CD4-positive, alpha-beta memory T cell (primary cell): ENCODE measurements at regions of chr12 and their contacts with region 1.

Region 1: DNA sequence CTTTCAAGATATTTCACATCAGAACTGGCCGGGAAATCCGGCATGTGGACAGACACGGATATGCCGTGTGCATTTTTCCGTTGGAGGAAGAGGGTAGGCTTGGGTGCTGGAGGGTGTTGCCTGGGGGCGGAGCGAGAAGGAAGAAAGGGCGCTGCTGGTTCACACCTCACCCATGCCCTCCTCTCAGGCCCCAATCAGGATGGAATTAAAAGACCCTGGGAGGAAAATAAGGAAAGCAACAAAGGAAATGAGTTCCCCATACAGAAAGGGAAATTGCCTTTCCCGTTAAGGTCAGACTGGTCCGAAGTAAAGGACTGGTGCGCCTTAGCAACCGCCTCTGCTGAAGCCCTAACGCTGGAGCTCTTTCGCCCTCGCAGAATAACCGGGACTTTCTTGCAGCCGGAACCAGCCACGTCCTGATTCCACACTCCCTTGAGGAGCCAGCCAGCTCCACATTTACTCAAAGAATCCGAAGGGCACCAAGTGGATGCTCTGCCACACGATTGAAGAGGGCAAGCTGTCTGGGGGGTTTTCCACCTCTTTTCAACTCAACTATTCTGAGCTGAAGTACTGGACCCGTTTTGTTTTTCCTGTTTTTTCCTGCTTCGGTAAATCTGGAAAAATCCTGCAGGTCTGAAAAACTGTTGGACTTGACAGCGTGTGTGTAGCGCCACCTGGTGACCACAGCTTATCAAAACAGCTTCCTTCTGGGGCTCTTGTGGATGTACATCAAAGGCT is 37.7 kb upstream of the BCL2L14 start:
- DNase-seq: peak; percentile 66 to 74 (median 70)
- H3K4me3 ChIP-seq: peak overlapping the region; percentile 52 to 80
- H3K4me3 Mint-ChIP-seq: peak overlapping the region; percentile 77 to 93 (median 86)
- H3K27ac ChIP-seq: peak overlapping the region; percentile 53
- H3K27ac Mint-ChIP-seq: peak overlapping the region; percentile 77 to 96 (median 92)
- H3K4me1 ChIP-seq: peaks cover 20% of the 10 kb centered on the region
- H3K4me1 Mint-ChIP-seq: peaks cover 19 to 24% (median 21%) of the 10 kb centered on the region in 4 donors
- H3K27me3 ChIP-seq: no peaks in the 10 kb centered on the region
- H3K27me3 Mint-ChIP-seq: peaks cover 0 to 3% of the 10 kb centered on the region in 2 donors

Region 2: DNA sequence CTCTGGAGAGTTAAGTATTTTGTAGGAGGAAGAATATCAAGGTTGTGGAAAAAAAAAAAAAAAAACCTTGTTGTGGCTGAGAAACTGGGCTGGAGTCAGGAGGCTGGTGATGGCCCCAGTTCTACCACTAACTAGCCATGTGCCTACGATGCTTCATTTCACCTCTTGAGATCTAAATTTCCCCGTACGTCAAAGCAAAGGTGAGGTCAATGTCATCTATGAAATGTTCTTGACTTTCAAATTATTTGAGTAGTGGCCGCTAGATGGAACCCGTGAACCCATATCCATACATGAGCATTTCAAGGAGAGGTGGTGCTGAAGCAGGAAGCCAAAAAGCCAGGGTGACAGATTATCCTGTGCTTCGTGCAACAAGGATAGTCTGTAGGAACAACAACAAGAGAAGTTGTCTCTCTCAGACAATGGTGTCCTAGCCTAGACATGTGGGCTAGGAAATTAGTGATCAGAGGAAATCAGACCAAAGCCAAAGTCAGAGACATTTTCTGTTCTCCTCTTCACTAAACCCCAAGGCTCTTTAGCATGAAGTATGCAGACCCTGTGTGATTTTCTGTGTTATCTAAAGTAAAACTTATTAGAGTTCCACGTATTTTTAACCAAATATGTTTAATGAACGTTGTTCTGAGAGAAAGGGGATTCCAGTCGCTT is 479.0 kb before region 1 on chr12:
- CTCF ChIA-PET with region 1: interaction called, 15 read pairs
- POLR2A ChIA-PET with region 1: no interaction called
- intact Hi-C with region 1: loop called (anchors 1 kb)
- DNase-seq: peak; percentile 53 to 68 (median 57)
- H3K4me3 ChIP-seq: no peak overlapping the region
- H3K4me3 Mint-ChIP-seq: peak overlapping the region in 4 of 8 donors; percentile 0 to 57 (median 50)
- H3K27ac ChIP-seq: no peak overlapping the region
- H3K27ac Mint-ChIP-seq: peak overlapping the region in 3 of 7 donors; percentile 2 to 85 (median 17)
- H3K4me1 ChIP-seq: peaks cover 24% of the 10 kb centered on the region
- H3K4me1 Mint-ChIP-seq: peaks cover 19 to 32% (median 23%) of the 10 kb centered on the region in 4 donors
- H3K27me3 ChIP-seq: no peaks in the 10 kb centered on the region
- H3K27me3 Mint-ChIP-seq: no peaks in the 10 kb centered on the region

Region 3: DNA sequence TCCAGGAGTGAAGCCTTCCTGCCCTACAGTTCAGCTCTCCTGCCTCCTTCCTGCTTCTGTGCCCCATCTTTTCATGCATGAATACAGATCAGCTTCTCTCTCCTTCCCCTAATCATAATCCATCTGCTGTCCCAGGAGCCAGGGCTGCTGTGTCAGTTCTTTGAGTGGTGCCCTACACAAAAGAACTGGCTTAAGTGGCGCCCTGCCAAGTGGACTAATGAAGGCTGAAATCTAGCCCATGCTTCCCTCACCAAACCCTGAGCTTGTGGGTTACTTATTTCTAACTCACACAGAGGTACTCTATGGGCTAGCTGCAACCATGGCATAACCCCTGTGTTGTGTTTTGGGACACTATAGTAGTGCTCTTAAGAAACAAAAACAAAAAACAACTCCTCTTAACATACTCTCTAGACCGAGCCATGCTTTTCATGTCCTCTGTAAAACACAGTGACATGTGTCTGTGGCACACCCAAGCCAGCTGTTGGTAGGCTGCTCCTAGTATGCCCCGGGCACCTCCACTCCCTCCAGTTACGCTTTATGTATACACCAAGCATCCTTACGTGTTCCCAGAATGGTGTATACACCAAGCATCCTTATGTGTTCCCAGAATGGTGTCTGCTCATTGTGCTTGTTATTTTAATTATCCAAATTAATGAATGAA is 402.8 kb before region 1 on chr12:
- CTCF ChIA-PET with region 1: interaction called, 48 read pairs
- POLR2A ChIA-PET with region 1: no interaction called
- intact Hi-C with region 1: no loop called
- DNase-seq: no peak
- H3K4me3 ChIP-seq: no peak overlapping the region
- H3K4me3 Mint-ChIP-seq: no peak overlapping the region
- H3K27ac ChIP-seq: no peak overlapping the region
- H3K27ac Mint-ChIP-seq: no peak overlapping the region
- H3K4me1 ChIP-seq: no peaks in the 10 kb centered on the region
- H3K4me1 Mint-ChIP-seq: peaks cover 0 to 4% (median under 1%) of the 10 kb centered on the region in 4 donors
- H3K27me3 ChIP-seq: no peaks in the 10 kb centered on the region
- H3K27me3 Mint-ChIP-seq: peaks cover 0 to 1% of the 10 kb centered on the region in 2 donors

Region 4: DNA sequence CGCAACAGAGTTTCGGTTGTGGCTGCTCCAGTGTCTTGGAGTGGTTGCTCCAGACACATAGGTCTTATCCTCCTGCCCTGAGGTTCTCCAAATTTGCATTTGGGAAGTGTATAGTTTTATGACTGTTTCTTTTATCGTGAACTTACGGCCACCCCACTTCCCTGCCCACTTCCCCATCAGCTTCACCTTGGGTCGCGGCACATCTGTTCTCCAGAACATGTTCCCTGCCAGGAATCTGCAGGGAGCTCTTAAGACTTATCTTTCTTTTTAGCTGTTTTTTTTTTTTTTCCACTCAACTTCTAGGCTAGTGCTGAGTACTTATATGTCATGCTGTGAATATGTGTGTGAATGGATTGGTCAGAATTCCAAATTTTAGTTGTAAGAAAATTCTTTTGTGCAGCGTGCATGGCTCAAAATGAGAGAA is 308.1 kb before region 1 on chr12:
- CTCF ChIA-PET with region 1: interaction called, 23 read pairs
- POLR2A ChIA-PET with region 1: interaction called, 7 read pairs
- intact Hi-C with region 1: loop called (anchors 5 kb)
- DNase-seq: no peak
- H3K4me3 ChIP-seq: no peak overlapping the region
- H3K4me3 Mint-ChIP-seq: peak overlapping the region in 1 of 8 donors; percentile 17
- H3K27ac ChIP-seq: no peak overlapping the region
- H3K27ac Mint-ChIP-seq: peak overlapping the region in 4 of 7 donors; percentile 6 to 55 (median 40)
- H3K4me1 ChIP-seq: peaks cover 61% of the 10 kb centered on the region
- H3K4me1 Mint-ChIP-seq: peaks cover 43 to 85% (median 69%) of the 10 kb centered on the region in 4 donors
- H3K27me3 ChIP-seq: no peaks in the 10 kb centered on the region
- H3K27me3 Mint-ChIP-seq: no peaks in the 10 kb centered on the region

Region 5: DNA sequence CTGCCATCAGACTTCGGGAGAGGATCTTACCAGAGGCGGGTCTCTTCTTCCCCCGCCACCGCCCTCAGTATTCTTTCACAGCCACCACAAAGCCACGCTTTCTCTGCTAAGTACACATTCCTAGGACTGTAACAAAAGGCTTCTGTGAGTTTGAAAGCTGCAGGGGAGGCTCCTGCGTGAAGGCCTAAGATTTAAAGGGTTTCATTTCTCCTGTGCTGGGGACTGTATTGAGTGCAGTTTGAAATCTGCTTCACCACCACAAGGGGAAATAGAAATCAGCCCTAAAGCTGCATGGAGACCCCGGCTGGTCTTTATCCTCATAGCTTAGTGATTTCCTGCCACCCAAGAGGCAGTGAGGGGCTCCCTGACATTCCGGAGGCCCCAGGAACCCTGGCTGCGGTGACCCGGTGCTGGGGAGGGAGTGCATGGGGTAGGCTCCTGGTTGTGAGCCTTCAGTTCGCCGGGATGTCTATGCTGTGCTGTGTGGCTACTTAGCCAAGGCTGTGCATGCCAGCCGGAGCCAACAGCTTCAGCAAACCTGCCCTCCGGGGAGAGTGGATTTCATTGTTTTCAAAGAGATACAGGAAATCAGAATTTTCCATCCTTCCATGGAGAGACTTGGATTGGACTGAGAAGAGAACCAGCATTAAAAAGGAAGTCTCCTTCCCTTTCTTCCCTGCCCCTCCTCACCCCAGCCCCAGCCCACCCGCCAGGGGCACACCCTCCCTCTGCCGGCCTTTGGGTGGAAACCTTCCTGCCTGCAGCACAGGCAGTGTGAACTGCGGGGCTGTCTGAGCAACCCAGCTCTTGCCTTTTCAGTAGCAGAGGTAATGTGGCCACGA is 220.2 kb before region 1 on chr12:
- CTCF ChIA-PET with region 1: interaction called, 11 read pairs
- POLR2A ChIA-PET with region 1: no interaction called
- intact Hi-C with region 1: loop called (anchors 2 kb)
- DNase-seq: peak in 1 of 5 donors; percentile 30
- H3K4me3 ChIP-seq: no peak overlapping the region
- H3K4me3 Mint-ChIP-seq: peak overlapping the region; percentile 46 to 87 (median 64)
- H3K27ac ChIP-seq: no peak overlapping the region
- H3K27ac Mint-ChIP-seq: peak overlapping the region; percentile 49 to 96 (median 88)
- H3K4me1 ChIP-seq: peaks cover 49% of the 10 kb centered on the region
- H3K4me1 Mint-ChIP-seq: peaks cover 38 to 82% (median 64%) of the 10 kb centered on the region in 4 donors
- H3K27me3 ChIP-seq: no peaks in the 10 kb centered on the region
- H3K27me3 Mint-ChIP-seq: no peaks in the 10 kb centered on the region

Region 6: DNA sequence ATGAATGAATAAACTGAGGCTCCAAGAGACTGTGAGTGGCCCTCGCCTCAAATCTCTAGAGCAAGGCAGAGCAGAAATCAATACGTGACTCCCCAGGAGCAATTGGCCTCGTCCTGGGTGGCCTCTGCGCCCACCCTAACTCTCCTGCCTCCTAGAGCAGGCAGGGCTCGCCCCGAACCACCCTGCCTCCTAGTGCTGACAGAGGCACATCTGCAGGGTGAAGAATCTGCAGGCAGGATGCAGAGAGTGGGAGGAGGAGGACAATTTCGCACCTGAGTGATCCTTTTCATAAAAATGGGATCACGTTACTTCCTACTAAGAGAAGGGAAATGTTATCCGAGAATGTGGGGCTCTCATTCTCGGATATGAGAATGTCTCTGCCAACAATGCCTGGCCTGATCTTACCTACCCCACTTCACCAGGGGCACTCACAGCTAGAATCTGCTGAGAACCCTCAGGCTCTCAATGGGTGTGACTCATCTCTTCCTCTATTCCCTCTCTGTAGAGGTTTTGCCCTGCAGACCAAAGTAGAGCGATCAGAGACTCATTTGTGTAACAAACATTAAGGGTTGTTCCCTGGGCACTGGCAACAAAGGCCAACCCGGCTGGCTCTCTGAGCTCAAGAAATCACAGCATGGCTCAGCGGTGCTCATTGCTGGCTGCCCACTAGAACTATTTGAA is 23.9 kb before region 1 on chr12:
- CTCF ChIA-PET with region 1: interaction called, 87 read pairs
- POLR2A ChIA-PET with region 1: interaction called, 72 read pairs
- intact Hi-C with region 1: loop called (anchors 1 kb)
- DNase-seq: peak; percentile 46 to 86 (median 56)
- H3K4me3 ChIP-seq: peak overlapping the region in 1 of 2 donors; percentile 12
- H3K4me3 Mint-ChIP-seq: peak overlapping the region; percentile 66 to 89 (median 80)
- H3K27ac ChIP-seq: peak overlapping the region; percentile 75
- H3K27ac Mint-ChIP-seq: peak overlapping the region; percentile 95 to 99 (median 97)
- H3K4me1 ChIP-seq: peaks cover 61% of the 10 kb centered on the region
- H3K4me1 Mint-ChIP-seq: peaks cover 65 to 92% (median 85%) of the 10 kb centered on the region in 4 donors
- H3K27me3 ChIP-seq: no peaks in the 10 kb centered on the region
- H3K27me3 Mint-ChIP-seq: no peaks in the 10 kb centered on the region